ENCODE measurements at regions of chr19 and their contacts with region 1.

Region 1: GRCh38 chr19:23273590-23274413 is 23.6 kb upstream of the ZNF724 start:
- DNase-seq: peak; percentile 89 to 94 (median 90)
- H3K4me3 ChIP-seq: peak overlapping the region; percentile 94 to 99
- H3K4me3 Mint-ChIP-seq: peak overlapping the region; percentile 96 to 99 (median 98)
- H3K27ac ChIP-seq: peak overlapping the region; percentile 92
- H3K27ac Mint-ChIP-seq: peak overlapping the region; percentile 93 to 97 (median 97)
- H3K4me1 ChIP-seq: peaks cover 21% of the 10 kb centered on the region
- H3K4me1 Mint-ChIP-seq: peaks cover 21 to 55% (median 30%) of the 10 kb centered on the region in 4 donors
- H3K27me3 ChIP-seq: no peaks in the 10 kb centered on the region
- H3K27me3 Mint-ChIP-seq: no peaks in the 10 kb centered on the region

Region 2: GRCh38 chr19:23249911-23250649 is 23.7 kb before region 1 on chr19 and contains the start of gene ZNF724:
- CTCF ChIA-PET with region 1: interaction called, 6 read pairs
- POLR2A ChIA-PET with region 1: interaction called, 61 read pairs
- intact Hi-C with region 1: loop called (anchors 1 kb)
- DNase-seq: peak; percentile 87 to 93 (median 89)
- H3K4me3 ChIP-seq: peak within 1 kb of the TSS; percentile 78 to 81
- H3K4me3 Mint-ChIP-seq: peak within 1 kb of the TSS; percentile 95 to 98 (median 97)
- H3K27ac ChIP-seq: peak within 1 kb of the TSS; percentile 63
- H3K27ac Mint-ChIP-seq: peak within 1 kb of the TSS; percentile 82 to 96 (median 93)
- H3K4me1 ChIP-seq: peaks cover 8% of the 10 kb centered on the region
- H3K4me1 Mint-ChIP-seq: peaks cover 5 to 18% (median 7%) of the 10 kb centered on the region in 4 donors
- H3K27me3 ChIP-seq: no peaks in the 10 kb centered on the region
- H3K27me3 Mint-ChIP-seq: no peaks in the 10 kb centered on the region
- total RNA-seq, gene ZNF724: 5.5 to 6.1 TPM

Region 3: DNA sequence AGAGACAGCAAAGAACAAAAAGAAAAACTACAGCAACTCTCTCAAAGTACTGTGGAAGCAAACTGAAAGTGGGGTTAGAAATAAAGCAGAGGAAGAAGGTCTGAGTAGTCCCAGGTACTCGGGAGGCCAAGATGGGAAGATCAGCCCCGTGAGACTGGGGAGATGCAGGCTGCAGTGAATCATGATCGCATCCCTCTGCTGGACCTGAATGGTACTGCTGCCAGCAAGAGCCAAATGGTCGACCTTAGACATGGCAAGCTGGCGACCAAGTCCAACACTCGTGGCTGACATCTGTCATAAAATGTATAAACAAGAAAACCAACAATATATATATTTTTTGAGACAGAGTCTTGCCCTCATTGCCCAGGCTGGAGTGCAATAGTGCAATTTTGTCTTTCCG is 10.1 kb after region 1 on chr19:
- CTCF ChIA-PET with region 1: interaction called, 18 read pairs
- POLR2A ChIA-PET with region 1: interaction called, 9 read pairs
- intact Hi-C with region 1: loop called (anchors 1 kb)
- DNase-seq: peak; percentile 47 to 62 (median 59)
- H3K4me3 ChIP-seq: no peak overlapping the region
- H3K4me3 Mint-ChIP-seq: peak overlapping the region in 5 of 8 donors; percentile 3 to 53 (median 21)
- H3K27ac ChIP-seq: no peak overlapping the region
- H3K27ac Mint-ChIP-seq: no peak overlapping the region
- H3K4me1 ChIP-seq: peaks cover 8% of the 10 kb centered on the region
- H3K4me1 Mint-ChIP-seq: peaks cover 12 to 25% (median 21%) of the 10 kb centered on the region in 4 donors
- H3K27me3 ChIP-seq: no peaks in the 10 kb centered on the region
- H3K27me3 Mint-ChIP-seq: peaks cover 0 to 3% of the 10 kb centered on the region in 2 donors

Region 4: DNA sequence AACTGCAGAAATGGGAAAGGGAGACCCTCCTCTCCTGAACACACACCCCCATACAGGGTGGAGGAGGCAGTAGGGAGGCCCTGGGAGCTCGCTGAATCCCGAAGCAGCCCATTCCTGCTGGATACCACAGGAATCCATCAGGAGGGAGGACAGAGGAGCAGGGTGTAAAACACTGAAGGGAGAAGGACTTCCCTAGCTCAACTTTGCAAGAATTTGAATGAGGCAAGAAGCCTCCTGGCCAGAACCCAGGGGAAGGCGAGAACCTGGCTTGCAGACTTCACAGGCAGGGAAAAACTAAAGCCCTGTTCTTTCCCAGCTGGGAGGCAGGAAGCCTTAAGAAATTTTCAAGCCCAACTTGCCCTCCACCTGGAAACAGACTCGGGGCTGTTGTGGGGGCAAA is 78.0 kb after region 1 on chr19:
- CTCF ChIA-PET with region 1: no interaction called
- POLR2A ChIA-PET with region 1: no interaction called
- intact Hi-C with region 1: no loop called
- DNase-seq: no peak
- H3K4me3 ChIP-seq: no peak overlapping the region
- H3K4me3 Mint-ChIP-seq: peak overlapping the region in 1 of 8 donors; percentile 13
- H3K27ac ChIP-seq: no peak overlapping the region
- H3K27ac Mint-ChIP-seq: no peak overlapping the region
- H3K4me1 ChIP-seq: no peaks in the 10 kb centered on the region
- H3K4me1 Mint-ChIP-seq: peaks cover 6 to 15% (median 11%) of the 10 kb centered on the region in 4 donors
- H3K27me3 ChIP-seq: no peaks in the 10 kb centered on the region
- H3K27me3 Mint-ChIP-seq: no peaks in the 10 kb centered on the region

Region 5: GRCh38 chr19:23686621-23687423 is 413.0 kb after region 1 on chr19 and contains the start of gene ZNF675:
- CTCF ChIA-PET with region 1: interaction called, 4 read pairs
- POLR2A ChIA-PET with region 1: interaction called, 8 read pairs
- intact Hi-C with region 1: loop called (anchors 2 kb)
- DNase-seq: peak; percentile 87 to 93 (median 88)
- H3K4me3 ChIP-seq: peak within 1 kb of the TSS; percentile 64 to 100
- H3K4me3 Mint-ChIP-seq: peak within 1 kb of the TSS; percentile 99 to 100 (median 99)
- H3K27ac ChIP-seq: peak within 1 kb of the TSS; percentile 83
- H3K27ac Mint-ChIP-seq: peak within 1 kb of the TSS; percentile 96 to 99 (median 98)
- H3K4me1 ChIP-seq: peaks cover 32% of the 10 kb centered on the region
- H3K4me1 Mint-ChIP-seq: peaks cover 35 to 60% (median 48%) of the 10 kb centered on the region in 4 donors
- H3K27me3 ChIP-seq: no peaks in the 10 kb centered on the region
- H3K27me3 Mint-ChIP-seq: no peaks in the 10 kb centered on the region
- total RNA-seq, gene ZNF675: 34.3 to 36.9 TPM

Region 6: GRCh38 chr19:24086974-24087595 is 813.3 kb after region 1 on chr19 and contains the start of gene ZNF254:
- CTCF ChIA-PET with region 1: no interaction called
- POLR2A ChIA-PET with region 1: interaction called, 14 read pairs
- intact Hi-C with region 1: no loop called
- DNase-seq: peak; percentile 65 to 84 (median 74)
- H3K4me3 ChIP-seq: peak within 1 kb of the TSS; percentile 69 to 78
- H3K4me3 Mint-ChIP-seq: peak within 1 kb of the TSS; percentile 93 to 97 (median 96)
- H3K27ac ChIP-seq: peak within 1 kb of the TSS; percentile 73
- H3K27ac Mint-ChIP-seq: peak within 1 kb of the TSS; percentile 89 to 97 (median 95)
- H3K4me1 ChIP-seq: peaks cover 8% of the 10 kb centered on the region
- H3K4me1 Mint-ChIP-seq: peaks cover 4 to 13% (median 8%) of the 10 kb centered on the region in 4 donors
- H3K27me3 ChIP-seq: no peaks in the 10 kb centered on the region
- H3K27me3 Mint-ChIP-seq: no peaks in the 10 kb centered on the region
- total RNA-seq, gene ZNF254: 17.6 to 19.1 TPM

Measured in CD4-positive, alpha-beta memory T cell (primary cell).